ENCODE measurements at regions of chr4 and their contacts with region 1.

Region 1: GRCh38 chr4:22515145-22515887 is 550 bp downstream of the ADGRA3 start:
- DNase-seq: peak; percentile 83

Region 2: GRCh38 chr4:22416403-22416802 is 98.9 kb before region 1 on chr4:
- intact Hi-C with region 1: loop called (anchors 5 kb)
- DNase-seq: no peak

Region 3: DNA sequence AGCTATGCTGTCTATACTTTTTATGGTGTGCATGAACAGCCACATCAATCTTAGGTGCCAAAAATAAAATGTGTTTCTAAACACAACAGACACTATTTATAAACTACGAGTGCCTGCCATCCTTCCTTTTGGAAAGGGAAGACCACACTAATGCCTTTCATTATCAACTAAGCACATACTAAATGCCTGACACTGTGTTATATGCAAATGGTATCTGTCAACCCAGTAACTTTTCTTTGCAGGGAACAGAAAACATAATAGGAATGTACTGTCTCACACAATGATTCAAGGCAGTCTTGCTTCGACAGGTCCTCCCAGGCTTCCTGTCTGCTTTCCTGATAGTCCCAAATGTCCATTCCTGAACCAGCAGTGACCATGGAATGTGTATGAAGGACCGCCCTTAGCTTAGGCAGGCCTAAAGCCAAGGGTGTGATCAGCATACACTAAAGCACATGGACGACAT is 43.3 kb before region 1 on chr4:
- intact Hi-C with region 1: loop called (anchors 2 kb)
- DNase-seq: no peak

Region 4: GRCh38 chr4:22688236-22688635 is 172.9 kb after region 1 on chr4:
- intact Hi-C with region 1: loop called (anchors 10 kb)
- DNase-seq: no peak

Measured in cardiac septum (tissue), 1 donor.